ENCODE measurements at regions of chr17 and their contacts with region 1.

Region 1: DNA sequence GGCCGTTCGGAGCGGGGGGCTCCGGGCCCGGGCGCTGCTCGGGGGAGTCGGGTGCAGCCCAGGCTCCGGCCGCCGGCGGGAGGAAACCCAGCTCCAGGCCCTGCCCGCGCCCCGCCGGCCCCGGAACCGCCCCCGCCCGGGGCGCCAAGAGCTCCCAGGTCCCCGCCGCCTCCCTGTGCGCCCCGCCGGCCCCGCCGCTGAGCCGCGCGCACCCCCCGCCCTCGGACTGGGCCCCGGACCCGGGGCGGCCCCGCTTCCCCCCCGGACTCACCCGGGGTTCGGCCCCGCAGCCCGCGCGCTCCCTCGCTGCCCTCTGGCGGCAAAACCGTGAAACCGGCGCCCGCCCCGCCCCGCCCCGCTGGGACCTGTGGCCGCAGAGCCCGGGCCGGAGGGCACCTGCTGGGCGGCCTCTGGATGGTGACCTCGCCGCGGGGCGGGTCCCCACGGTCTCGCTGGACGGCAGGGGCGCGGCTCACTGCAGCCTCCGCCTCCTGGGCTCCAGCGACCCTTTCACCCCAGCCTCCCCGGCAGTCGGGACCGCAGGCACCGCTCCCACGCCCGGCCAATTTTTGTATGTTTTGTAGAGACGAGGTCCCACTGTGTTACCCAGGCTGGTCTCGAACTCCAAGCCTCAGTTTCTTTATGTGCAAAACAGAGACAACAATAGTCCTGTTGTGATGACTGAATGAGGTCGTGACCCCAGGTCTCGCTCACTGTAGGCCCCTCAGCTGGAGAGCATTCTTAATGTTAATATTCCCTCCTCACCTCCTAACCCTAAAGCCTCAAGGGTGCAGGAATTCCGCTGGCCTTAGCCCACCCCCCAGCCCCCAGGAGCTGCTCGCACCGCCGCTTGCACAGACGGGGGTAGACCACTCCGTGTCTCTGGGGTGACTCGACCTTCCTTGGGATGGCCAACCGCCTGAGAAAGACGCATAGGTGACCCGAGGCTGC is 33.6 kb upstream of the RPH3AL start:
- DNase-seq: peak; percentile 77 to 88
- ATAC-seq: peak; percentile 56 to 83 (median 72)
- H3K4me3 ChIP-seq: peak overlapping the region; percentile 45 to 60 (median 54)
- H3K27ac ChIP-seq: peak overlapping the region; percentile 79 to 94 (median 90)
- H3K4me1 ChIP-seq: peaks cover 3 to 41% (median 12%) of the 10 kb centered on the region in 9 donors
- H3K27me3 ChIP-seq: peaks cover 0 to 30% (median 4%) of the 10 kb centered on the region in 7 donors
- CTCF ChIP-seq: peak; percentile 58 to 94 (median 80)

Region 2: DNA sequence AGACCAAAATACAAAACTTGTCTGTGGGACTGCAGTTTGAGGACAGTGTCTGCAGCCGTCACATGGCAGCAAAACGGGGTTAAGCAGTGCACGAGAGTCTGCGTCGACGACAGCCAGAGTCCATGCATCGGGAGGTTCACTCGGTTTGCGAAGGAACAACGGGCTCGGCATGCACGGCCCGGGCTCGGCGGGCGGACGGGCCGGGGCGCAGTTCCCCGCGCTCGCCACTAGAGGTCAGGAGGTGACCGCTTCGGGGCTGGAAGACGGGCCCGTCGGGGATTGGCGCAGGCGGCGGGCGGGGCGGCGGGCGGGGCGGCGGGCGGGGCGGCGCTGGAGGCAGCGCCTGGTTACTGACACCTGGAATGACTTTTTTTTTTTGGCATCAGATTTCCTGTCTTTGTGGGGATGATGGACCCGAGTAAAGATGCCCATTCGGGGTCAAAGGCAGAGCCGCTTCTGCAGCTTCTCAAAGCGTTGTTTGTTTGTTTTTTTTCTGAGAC is 242.4 kb before region 1 on chr17:
- intact Hi-C with region 1: loop called in 7 of 10 experiments (anchors 2 to 5 kb)
- DNase-seq: peak; percentile 78 to 90
- ATAC-seq: peak; percentile 84 to 93 (median 88)
- H3K4me3 ChIP-seq: peak overlapping the region in 1 of 10 donors; percentile 24
- H3K27ac ChIP-seq: no peak overlapping the region
- H3K4me1 ChIP-seq: peaks cover 0 to 12% (median 4%) of the 10 kb centered on the region in 9 donors
- H3K27me3 ChIP-seq: peaks cover 0 to 3% (median 0%) of the 10 kb centered on the region in 7 donors
- CTCF ChIP-seq: peak; percentile 90 to 97 (median 93)

Region 3: GRCh38 chr17:164303-165235 is 221.6 kb before region 1 on chr17:
- intact Hi-C with region 1: loop called in 6 of 10 experiments (anchors 5 kb)
- DNase-seq: peak in 1 of 2 donors; percentile 46
- ATAC-seq: peak; percentile 35 to 87 (median 80)
- H3K4me3 ChIP-seq: no peak overlapping the region
- H3K27ac ChIP-seq: no peak overlapping the region
- H3K4me1 ChIP-seq: peaks cover 0 to 4% (median 0%) of the 10 kb centered on the region in 9 donors
- H3K27me3 ChIP-seq: no peaks in the 10 kb centered on the region
- CTCF ChIP-seq: peak in 8 of 9 donors; percentile 43 to 70 (median 63)

Region 4: GRCh38 chr17:179721-180391 is 206.3 kb before region 1 on chr17:
- intact Hi-C with region 1: loop called in 1 of 10 experiments (anchors 5 kb)
- DNase-seq: no peak
- ATAC-seq: peak in 6 of 8 donors; percentile 12 to 32 (median 19)
- H3K4me3 ChIP-seq: peak overlapping the region; percentile 32 to 75 (median 61)
- H3K27ac ChIP-seq: peak overlapping the region; percentile 75 to 94 (median 84)
- H3K4me1 ChIP-seq: peaks cover 2 to 47% (median 31%) of the 10 kb centered on the region in 9 donors
- H3K27me3 ChIP-seq: peaks cover 13 to 68% (median 38%) of the 10 kb centered on the region in 7 donors
- CTCF ChIP-seq: no peak

Region 5: GRCh38 chr17:292531-293382 is 93.4 kb before region 1 on chr17:
- intact Hi-C with region 1: no loop called
- DNase-seq: no peak
- ATAC-seq: no peak
- H3K4me3 ChIP-seq: peak overlapping the region in 1 of 10 donors; percentile 5
- H3K27ac ChIP-seq: no peak overlapping the region
- H3K4me1 ChIP-seq: peaks cover 0 to 1% (median 0%) of the 10 kb centered on the region in 9 donors
- H3K27me3 ChIP-seq: peaks cover 0 to 25% (median 12%) of the 10 kb centered on the region in 7 donors
- CTCF ChIP-seq: no peak

Region 6: DNA sequence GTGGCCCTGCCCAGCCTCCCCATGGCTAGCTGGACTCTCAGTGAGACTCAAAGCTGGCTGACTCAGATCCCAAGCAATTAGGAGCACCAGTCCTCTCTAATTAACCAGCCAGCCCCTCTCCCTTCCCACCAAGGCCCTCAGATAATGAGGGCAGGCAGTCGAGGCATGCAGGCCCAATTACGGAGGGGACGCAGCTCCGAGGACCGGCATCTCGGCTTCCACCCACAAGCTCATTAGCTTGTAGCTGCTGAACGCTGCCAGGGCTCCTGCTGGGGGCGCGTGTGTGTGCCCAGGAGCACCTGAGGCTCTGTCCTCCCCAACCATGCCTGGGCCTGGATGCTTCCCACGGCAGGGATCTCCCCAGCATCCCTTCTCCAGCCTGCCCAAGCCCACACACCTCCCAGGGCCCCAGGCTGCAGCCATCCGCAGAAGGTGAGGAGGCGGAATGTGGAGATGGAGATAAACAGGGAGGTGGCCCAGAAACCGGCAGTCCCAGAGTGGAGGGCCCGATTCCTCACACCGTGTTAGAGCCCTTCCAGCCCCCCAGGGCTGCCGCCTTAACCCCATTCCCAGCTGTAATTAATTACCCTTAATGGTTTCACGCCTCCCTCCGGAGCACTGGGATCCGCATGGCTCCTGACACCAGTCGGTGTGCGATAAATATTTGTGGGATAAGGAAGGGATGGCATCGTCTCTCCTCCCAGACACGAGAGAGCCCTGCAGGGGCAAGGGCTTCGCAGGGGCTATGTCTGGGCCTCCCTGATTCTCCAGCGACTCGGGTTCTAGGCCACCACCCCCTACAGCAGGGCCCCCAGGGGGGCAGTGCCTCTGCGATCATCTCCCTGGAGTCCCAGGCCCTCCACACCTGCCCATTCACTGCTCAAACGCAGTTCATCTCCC is 75.8 kb before region 1 on chr17:
- intact Hi-C with region 1: loop called in 1 of 10 experiments (anchors 5 kb)
- DNase-seq: no peak
- ATAC-seq: no peak
- H3K4me3 ChIP-seq: no peak overlapping the region
- H3K27ac ChIP-seq: no peak overlapping the region
- H3K4me1 ChIP-seq: peaks cover 0 to 21% (median under 1%) of the 10 kb centered on the region in 9 donors
- H3K27me3 ChIP-seq: peaks cover 0 to 23% (median 0%) of the 10 kb centered on the region in 7 donors
- CTCF ChIP-seq: no peak

Region 7: DNA sequence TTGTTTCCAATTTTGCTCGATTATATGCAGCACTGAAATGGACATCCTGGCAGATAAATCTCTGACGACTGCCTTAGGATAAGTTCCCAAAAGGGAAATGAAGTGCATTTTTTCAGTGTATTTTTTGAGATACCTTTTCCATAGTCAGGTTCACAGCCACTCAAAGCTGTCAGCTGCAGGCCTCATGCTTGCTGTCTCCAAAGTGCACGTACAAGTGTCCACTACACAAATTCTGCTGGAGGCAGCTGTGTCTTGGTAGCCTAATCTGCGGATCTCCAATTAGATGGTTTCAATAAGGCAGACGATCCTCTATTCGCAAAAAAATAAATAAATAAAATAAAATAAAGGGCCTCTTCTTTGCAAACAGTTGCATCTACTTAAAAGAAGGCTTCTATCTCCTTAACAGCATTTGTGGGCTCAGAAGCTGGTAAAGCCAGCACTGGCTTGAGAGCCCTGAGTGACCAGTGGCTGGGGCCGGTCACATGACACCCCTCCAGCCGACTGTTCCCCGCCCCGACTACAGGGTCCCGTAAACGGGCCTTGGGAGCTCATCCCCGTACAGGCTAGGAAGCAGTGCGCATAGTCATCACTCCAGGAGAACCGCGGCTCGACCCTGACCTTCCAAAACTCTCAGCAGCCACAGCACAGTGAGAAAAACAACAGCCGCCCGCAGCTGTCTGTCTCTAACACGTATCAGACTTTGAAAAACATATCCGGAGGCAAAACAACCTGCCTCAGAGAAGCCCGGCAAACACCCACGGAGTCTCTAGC is 52.4 kb before region 1 on chr17:
- intact Hi-C with region 1: loop called in 3 of 10 experiments (anchors 5 kb)
- DNase-seq: peak; percentile 79 to 82
- ATAC-seq: peak; percentile 80 to 87 (median 85)
- H3K4me3 ChIP-seq: peak overlapping the region; percentile 10 to 65 (median 46)
- H3K27ac ChIP-seq: peak overlapping the region; percentile 88 to 97 (median 92)
- H3K4me1 ChIP-seq: peaks cover 11 to 56% (median 37%) of the 10 kb centered on the region in 9 donors
- H3K27me3 ChIP-seq: peaks cover 0 to 36% (median 0%) of the 10 kb centered on the region in 7 donors
- CTCF ChIP-seq: no peak

Region 8: DNA sequence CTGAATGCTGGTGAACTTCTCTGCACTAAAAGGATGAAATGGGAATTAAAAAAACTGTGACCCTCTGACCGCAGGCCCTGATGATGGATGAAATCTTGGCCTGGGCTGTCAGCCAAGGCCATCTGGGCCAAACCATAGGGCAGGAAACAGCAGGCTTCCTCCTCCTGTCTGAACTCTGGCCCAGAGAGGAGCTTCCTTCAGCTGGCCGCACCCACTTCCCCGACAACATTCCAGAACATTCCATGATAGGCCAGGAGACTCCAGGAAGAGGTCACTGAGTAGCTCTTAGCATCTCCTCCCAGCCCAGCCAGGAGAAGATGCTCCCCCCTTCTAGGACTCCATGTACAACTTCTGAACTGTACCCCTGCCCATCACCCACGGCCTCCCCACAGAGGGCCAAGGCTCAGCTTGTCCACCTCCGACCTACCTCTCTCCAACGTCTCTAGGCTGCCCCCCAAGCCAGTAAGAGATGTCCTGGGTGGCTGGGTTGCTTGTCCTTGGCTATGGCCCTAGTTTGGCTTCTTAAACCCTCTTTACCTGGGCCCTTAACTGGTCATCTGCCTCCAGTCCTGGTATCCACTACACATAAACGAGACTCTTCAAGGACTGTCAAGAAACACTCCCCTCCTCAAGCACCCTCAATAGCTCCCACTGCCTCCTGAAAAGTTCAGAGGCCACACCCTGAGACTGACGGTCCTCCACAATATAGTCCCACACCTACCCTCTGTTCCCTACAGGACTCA is 35.3 kb before region 1 on chr17:
- intact Hi-C with region 1: loop called in 1 of 10 experiments (anchors 2 kb)
- DNase-seq: peak; percentile 83 to 92
- ATAC-seq: peak; percentile 87 to 93 (median 91)
- H3K4me3 ChIP-seq: no peak overlapping the region
- H3K27ac ChIP-seq: peak overlapping the region; percentile 79 to 96 (median 87)
- H3K4me1 ChIP-seq: peaks cover 25 to 68% (median 57%) of the 10 kb centered on the region in 9 donors
- H3K27me3 ChIP-seq: no peaks in the 10 kb centered on the region
- CTCF ChIP-seq: no peak

Region 9: GRCh38 chr17:364308-364707 is 21.9 kb before region 1 on chr17:
- intact Hi-C with region 1: no loop called
- DNase-seq: no peak
- ATAC-seq: peak in 2 of 8 donors; percentile 51 to 67
- H3K4me3 ChIP-seq: no peak overlapping the region
- H3K27ac ChIP-seq: no peak overlapping the region
- H3K4me1 ChIP-seq: peaks cover 0 to 5% (median 0%) of the 10 kb centered on the region in 9 donors
- H3K27me3 ChIP-seq: no peaks in the 10 kb centered on the region
- CTCF ChIP-seq: no peak

Measured in heart right ventricle (tissue), 16 donors.